ENCODE measurements at regions of chr1 and their contacts with region 1.

Region 1: DNA sequence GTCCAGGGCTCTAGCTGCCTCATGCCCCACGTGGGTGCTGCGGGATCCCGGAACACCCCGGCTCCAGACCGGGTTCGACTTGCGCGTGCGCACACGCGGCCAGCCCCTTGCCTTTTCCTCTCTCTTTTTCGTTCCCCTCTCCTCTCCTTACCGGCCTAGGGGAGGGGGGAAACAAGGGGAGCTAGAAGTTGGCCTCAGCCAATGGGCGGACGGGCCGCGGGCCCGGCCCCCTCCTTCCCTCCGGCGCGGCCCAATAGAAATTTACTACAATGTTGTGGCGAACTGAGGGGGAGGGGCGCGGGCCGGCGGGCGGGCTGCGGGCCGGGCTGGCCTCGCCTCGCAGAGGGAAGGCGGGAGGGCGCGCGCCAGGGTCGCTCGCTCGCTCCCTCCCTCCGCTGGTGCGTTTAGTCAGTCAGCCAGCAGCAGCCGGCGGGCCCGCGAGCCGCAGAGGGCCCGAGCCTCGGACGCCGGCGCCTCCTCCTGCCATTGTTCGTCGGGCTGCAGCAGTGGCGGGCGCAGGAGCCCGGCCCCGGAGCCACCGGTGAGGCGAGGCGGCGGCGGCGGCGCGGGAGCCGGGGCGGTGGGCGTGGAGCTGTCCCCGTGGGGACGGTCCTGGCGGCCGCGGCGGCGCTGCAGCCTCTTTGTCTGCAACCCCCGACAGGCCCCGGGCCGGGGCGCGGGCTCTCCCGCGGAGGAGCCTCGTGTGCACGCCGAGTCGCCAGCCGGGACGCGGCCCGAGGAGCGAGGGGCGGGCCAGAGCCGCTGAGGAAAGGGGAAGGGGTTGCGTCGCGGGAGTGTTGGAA is at the start of gene EPB41:
- DNase-seq: peak; percentile 93
- H3K4me3 Mint-ChIP-seq: peak within 1 kb of the TSS; percentile 90
- H3K27ac Mint-ChIP-seq: peak within 1 kb of the TSS; percentile 88
- H3K4me1 Mint-ChIP-seq: peaks cover 46% of the 10 kb centered on the region
- H3K27me3 Mint-ChIP-seq: no peaks in the 10 kb centered on the region
- total RNA-seq, gene EPB41: 97.4 to 100 TPM

Region 2: GRCh38 chr1:28926629-28927265 is 12.3 kb after region 1 on chr1:
- CTCF ChIA-PET with region 1: interaction called, 4 read pairs
- intact Hi-C with region 1: loop called (anchors 1 kb)
- DNase-seq: peak; percentile 40
- H3K4me3 Mint-ChIP-seq: peak overlapping the region; percentile 44
- H3K27ac Mint-ChIP-seq: peak overlapping the region; percentile 76
- H3K4me1 Mint-ChIP-seq: peaks cover 62% of the 10 kb centered on the region
- H3K27me3 Mint-ChIP-seq: no peaks in the 10 kb centered on the region

Region 3: GRCh38 chr1:28933277-28933676 is 18.8 kb after region 1 on chr1:
- CTCF ChIA-PET with region 1: interaction called, 4 read pairs
- intact Hi-C with region 1: loop called (anchors 1 kb)
- DNase-seq: no peak
- H3K4me3 Mint-ChIP-seq: peak overlapping the region; percentile 52
- H3K27ac Mint-ChIP-seq: peak overlapping the region; percentile 74
- H3K4me1 Mint-ChIP-seq: peaks cover 73% of the 10 kb centered on the region
- H3K27me3 Mint-ChIP-seq: no peaks in the 10 kb centered on the region

Measured in activated naive CD4-positive, alpha-beta T cell treated with anti-CD3 and anti-CD28 coated beads for 36 hours (primary cell).